ENCODE measurements at regions of chr19 and their contacts with region 1.

Region 1: DNA sequence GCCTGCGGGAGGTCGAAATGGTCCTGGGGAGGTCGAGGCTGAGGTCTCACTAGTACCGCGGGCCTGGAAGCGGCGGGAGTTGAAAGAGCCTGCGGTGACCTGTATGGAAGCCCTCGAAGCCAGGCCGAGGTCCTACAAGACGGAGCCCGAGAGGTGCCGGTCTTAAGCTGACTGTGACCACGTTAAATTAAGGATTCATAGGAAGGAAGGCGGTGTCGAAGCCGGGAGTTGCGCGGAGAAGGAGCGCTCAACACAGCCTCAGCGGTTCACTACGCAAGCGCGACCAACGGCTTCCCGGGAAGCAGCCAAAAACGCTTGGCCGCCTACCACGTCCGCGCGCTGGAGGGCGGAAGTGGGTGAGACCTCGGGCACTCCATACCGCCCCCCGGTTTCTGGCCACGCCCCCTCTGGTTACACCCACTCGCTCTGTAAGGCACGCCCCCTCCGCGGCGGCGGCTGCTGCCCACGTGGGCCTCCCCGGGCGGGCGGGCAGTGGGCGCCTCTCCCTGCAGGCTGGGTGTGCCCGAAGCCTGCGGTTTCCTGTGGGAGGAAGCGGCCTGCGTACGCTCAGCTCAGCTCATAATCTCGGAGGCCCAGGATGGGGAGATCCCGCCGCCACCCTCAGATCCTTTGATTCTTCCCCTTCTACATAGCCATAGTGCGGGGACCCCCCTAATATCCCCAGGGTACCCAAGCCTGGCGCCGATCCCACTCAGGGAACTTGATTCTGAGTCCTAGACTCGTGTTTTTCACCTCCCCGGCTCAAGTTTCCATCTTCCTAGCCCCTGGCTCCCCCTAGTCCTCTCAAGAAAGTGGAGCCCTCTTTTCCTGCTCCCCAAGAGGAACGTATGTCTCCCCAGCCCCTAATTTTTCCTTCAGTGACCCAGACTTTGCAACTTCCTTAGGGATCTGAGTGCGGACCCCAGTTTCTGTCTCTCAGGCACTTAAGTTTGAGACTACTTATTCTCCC is 3.4 kb upstream of the EMP3 start:
- DNase-seq: peak; percentile 99
- ATAC-seq: peak; percentile 66
- H3K4me3 Mint-ChIP-seq: peak overlapping the region; percentile 94
- H3K27ac Mint-ChIP-seq: peak overlapping the region; percentile 99
- H3K4me1 Mint-ChIP-seq: peaks cover 63% of the 10 kb centered on the region
- H3K27me3 Mint-ChIP-seq: no peaks in the 10 kb centered on the region
- CTCF ChIP-seq: no peak

Region 2: GRCh38 chr19:48255376-48256303 is 66.3 kb before region 1 on chr19 and contains the start of gene CARD8:
- CTCF ChIA-PET with region 1: interaction called, 3 read pairs
- POLR2A ChIA-PET with region 1: interaction called, 12 read pairs
- intact Hi-C with region 1: no loop called
- DNase-seq: peak; percentile 73
- ATAC-seq: peak; percentile 80
- H3K4me3 Mint-ChIP-seq: peak within 1 kb of the TSS; percentile 99
- H3K27ac Mint-ChIP-seq: peak within 1 kb of the TSS; percentile 100
- H3K4me1 Mint-ChIP-seq: peaks cover 62% of the 10 kb centered on the region
- H3K27me3 Mint-ChIP-seq: no peaks in the 10 kb centered on the region
- CTCF ChIP-seq: no peak
- total RNA-seq, gene CARD8: 103 and 109 TPM in 2 replicates

Region 3: GRCh38 chr19:48333467-48334384 is 11.8 kb after region 1 on chr19:
- CTCF ChIA-PET with region 1: interaction called, 215 read pairs
- POLR2A ChIA-PET with region 1: interaction called, 308 read pairs
- intact Hi-C with region 1: loop called (anchors 1 kb)
- DNase-seq: peak; percentile 90
- ATAC-seq: peak; percentile 66
- H3K4me3 Mint-ChIP-seq: peak overlapping the region; percentile 95
- H3K27ac Mint-ChIP-seq: peak overlapping the region; percentile 93
- H3K4me1 Mint-ChIP-seq: peaks cover 54% of the 10 kb centered on the region
- H3K27me3 Mint-ChIP-seq: no peaks in the 10 kb centered on the region
- CTCF ChIP-seq: no peak

Region 4: DNA sequence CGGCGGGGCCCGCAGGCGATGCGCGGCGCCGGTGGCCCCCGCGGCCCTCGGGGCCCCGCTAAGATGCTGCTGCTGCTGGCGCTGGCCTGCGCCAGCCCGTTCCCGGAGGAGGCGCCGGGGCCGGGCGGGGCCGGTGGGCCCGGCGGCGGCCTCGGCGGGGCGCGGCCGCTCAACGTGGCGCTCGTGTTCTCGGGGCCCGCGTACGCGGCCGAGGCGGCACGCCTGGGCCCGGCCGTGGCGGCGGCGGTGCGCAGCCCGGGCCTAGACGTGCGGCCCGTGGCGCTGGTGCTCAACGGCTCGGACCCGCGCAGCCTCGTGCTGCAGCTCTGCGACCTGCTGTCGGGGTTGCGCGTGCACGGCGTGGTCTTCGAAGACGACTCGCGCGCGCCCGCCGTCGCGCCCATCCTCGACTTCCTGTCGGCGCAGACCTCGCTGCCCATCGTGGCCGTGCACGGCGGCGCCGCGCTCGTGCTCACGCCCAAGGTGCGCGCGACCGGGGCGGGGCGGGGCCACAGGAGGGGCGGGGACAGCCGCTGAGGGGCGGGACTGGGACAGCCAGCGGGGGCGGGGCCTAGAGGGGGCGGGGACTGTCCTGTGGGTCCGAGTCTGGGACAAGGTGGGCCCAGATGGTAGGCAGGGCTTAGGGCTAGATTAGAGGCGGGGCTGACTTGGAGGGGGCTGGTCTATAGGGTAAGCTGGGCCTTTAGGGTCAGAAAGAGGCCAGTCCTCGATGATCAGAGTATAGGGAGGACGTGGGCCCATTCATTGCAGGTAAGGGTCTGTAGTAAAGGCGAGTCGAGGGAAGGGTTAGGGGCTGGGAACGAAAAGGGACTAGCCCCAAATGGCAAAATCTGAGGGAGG is 76.7 kb after region 1 on chr19:
- CTCF ChIA-PET with region 1: no interaction called
- POLR2A ChIA-PET with region 1: interaction called, 8 read pairs
- intact Hi-C with region 1: loop called (anchors 2 kb)
- DNase-seq: peak; percentile 80
- ATAC-seq: peak; percentile 72
- H3K4me3 Mint-ChIP-seq: peak overlapping the region; percentile 66
- H3K27ac Mint-ChIP-seq: no peak overlapping the region
- H3K4me1 Mint-ChIP-seq: peaks cover 46% of the 10 kb centered on the region
- H3K27me3 Mint-ChIP-seq: peaks cover 26% of the 10 kb centered on the region
- CTCF ChIP-seq: no peak

Region 5: DNA sequence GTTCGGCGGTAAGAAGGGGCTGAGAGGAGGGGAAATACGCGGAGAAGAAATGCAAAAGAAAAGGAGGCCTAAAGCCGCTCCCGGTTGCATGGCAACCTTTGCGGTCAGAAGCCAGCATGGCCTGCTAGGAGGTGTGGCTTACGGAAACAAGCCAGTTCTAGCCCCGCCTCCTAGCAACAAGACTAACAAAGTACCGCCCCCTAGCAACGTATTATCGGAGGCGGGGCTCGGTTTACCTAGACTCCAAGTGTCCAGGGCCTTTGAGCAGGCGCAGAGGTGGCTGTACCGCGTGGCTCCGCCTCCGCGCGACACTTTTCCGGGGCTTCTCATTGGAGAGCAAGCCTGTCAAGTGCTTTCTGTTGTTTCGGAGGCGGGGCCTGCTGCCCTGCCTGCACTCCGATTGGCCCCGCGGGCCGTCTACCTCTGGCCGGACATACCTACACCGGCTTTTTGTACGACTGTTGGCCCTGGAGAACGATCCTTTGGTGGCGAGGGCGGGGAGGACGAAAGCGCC is 146.9 kb after region 1 on chr19:
- CTCF ChIA-PET with region 1: no interaction called
- POLR2A ChIA-PET with region 1: interaction called, 6 read pairs
- intact Hi-C with region 1: loop called (anchors 1 kb)
- DNase-seq: peak; percentile 95
- ATAC-seq: peak; percentile 88
- H3K4me3 Mint-ChIP-seq: peak overlapping the region; percentile 90
- H3K27ac Mint-ChIP-seq: peak overlapping the region; percentile 94
- H3K4me1 Mint-ChIP-seq: peaks cover 27% of the 10 kb centered on the region
- H3K27me3 Mint-ChIP-seq: no peaks in the 10 kb centered on the region
- CTCF ChIP-seq: no peak

Region 6: GRCh38 chr19:48618916-48619691 is 297.2 kb after region 1 on chr19 and contains the starts of genes RPL18 and SPHK2:
- CTCF ChIA-PET with region 1: interaction called, 3 read pairs
- POLR2A ChIA-PET with region 1: interaction called, 10 read pairs
- intact Hi-C with region 1: no loop called
- DNase-seq: peak; percentile 93
- ATAC-seq: peak; percentile 81
- H3K4me3 Mint-ChIP-seq: peak within 1 kb of the TSS; percentile 98
- H3K27ac Mint-ChIP-seq: peak within 1 kb of the TSS; percentile 97
- H3K4me1 Mint-ChIP-seq: peaks cover 56% of the 10 kb centered on the region
- H3K27me3 Mint-ChIP-seq: no peaks in the 10 kb centered on the region
- CTCF ChIP-seq: no peak
- total RNA-seq, gene RPL18: 2,427 and 2,762 TPM in 2 replicates
- total RNA-seq, gene SPHK2: 38.2 and 48.5 TPM in 2 replicates

Region 7: GRCh38 chr19:49916842-49917733 is 1595.2 kb after region 1 on chr19:
- CTCF ChIA-PET with region 1: no interaction called
- POLR2A ChIA-PET with region 1: interaction called, 10 read pairs
- intact Hi-C with region 1: no loop called
- DNase-seq: peak; percentile 41
- ATAC-seq: peak; percentile 74
- H3K4me3 Mint-ChIP-seq: peak overlapping the region; percentile 77
- H3K27ac Mint-ChIP-seq: peak overlapping the region; percentile 94
- H3K4me1 Mint-ChIP-seq: peaks cover 77% of the 10 kb centered on the region
- H3K27me3 Mint-ChIP-seq: no peaks in the 10 kb centered on the region
- CTCF ChIP-seq: no peak

Measured in activated B cell treated with CpG ODN at 0.5 μM for 24 hours (primary cell).